ENCODE measurements at regions of chr10 and their contacts with region 1.

Region 1: DNA sequence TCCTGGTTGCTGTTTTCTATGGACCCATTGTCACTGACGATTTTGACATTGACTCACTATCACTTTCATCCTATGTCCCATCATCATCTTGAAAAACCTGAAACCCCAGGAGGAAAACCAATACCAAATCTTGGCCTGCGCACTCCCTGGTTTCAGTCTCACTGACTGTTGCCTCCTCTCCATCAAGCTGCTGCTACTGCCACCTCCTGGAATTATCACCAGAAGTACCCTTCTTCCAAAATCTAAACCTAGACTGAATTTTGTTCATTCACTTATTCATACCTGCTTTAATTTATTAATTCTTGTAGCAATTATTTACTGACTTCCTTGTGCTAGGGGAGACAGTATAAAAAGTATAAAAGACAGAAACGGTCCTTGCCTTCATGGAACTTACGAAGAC is 44.5 kb upstream of the ACBD5 start:
- DNase-seq: peak in 1 of 2 donors; percentile 26
- ATAC-seq: peak in 4 of 8 donors; percentile 46 to 66 (median 58)
- H3K4me3 ChIP-seq: no peak overlapping the region
- H3K27ac ChIP-seq: no peak overlapping the region
- H3K4me1 ChIP-seq: no peaks in the 10 kb centered on the region
- H3K27me3 ChIP-seq: no peaks in the 10 kb centered on the region
- CTCF ChIP-seq: peak in 7 of 9 donors; percentile 38 to 63 (median 44)

Region 2: GRCh38 chr10:27230022-27230421 is 55.1 kb before region 1 on chr10:
- intact Hi-C with region 1: loop called in 1 of 10 experiments (anchors 5 kb)
- DNase-seq: no peak
- ATAC-seq: no peak
- H3K4me3 ChIP-seq: no peak overlapping the region
- H3K27ac ChIP-seq: no peak overlapping the region
- H3K4me1 ChIP-seq: peaks cover 0 to under 1% (median 0%) of the 10 kb centered on the region in 9 donors
- H3K27me3 ChIP-seq: no peaks in the 10 kb centered on the region
- CTCF ChIP-seq: no peak

Measured in heart right ventricle (tissue), 16 donors.